CD8-positive, alpha-beta T cell (primary cell): ENCODE measurements at regions of chr2 and their contacts with region 1.

Region 1: GRCh38 chr2:7567646-7568045 is 650.4 kb downstream of the RNF144A start:
- DNase-seq: peak; percentile 35 to 88 (median 66)
- ATAC-seq: peak; percentile 92
- H3K4me3 ChIP-seq: no peak overlapping the region
- H3K4me3 Mint-ChIP-seq: peak overlapping the region; percentile 32
- H3K27ac ChIP-seq: peak overlapping the region; percentile 34 to 53
- H3K27ac Mint-ChIP-seq: peak overlapping the region; percentile 87
- H3K4me1 ChIP-seq: peaks cover 61% of the 10 kb centered on the region
- H3K4me1 Mint-ChIP-seq: peaks cover 71% of the 10 kb centered on the region
- H3K27me3 ChIP-seq: no peaks in the 10 kb centered on the region
- H3K27me3 Mint-ChIP-seq: no peaks in the 10 kb centered on the region
- CTCF ChIP-seq: no peak

Region 2: GRCh38 chr2:7450188-7450832 is 117.3 kb before region 1 on chr2:
- CTCF ChIA-PET with region 1: interaction called, 12 read pairs
- POLR2A ChIA-PET with region 1: interaction called, 17 read pairs
- intact Hi-C with region 1: loop called (anchors 1 to 5 kb)
- DNase-seq: peak in 6 of 9 experiments; percentile 41 to 90 (median 68)
- ATAC-seq: peak; percentile 80
- H3K4me3 ChIP-seq: no peak overlapping the region
- H3K4me3 Mint-ChIP-seq: peak overlapping the region; percentile 65
- H3K27ac ChIP-seq: peak overlapping the region; percentile 51 to 81
- H3K27ac Mint-ChIP-seq: peak overlapping the region; percentile 98
- H3K4me1 ChIP-seq: peaks cover 70% of the 10 kb centered on the region
- H3K4me1 Mint-ChIP-seq: peaks cover 85% of the 10 kb centered on the region
- H3K27me3 ChIP-seq: no peaks in the 10 kb centered on the region
- H3K27me3 Mint-ChIP-seq: no peaks in the 10 kb centered on the region
- CTCF ChIP-seq: no peak

Region 3: DNA sequence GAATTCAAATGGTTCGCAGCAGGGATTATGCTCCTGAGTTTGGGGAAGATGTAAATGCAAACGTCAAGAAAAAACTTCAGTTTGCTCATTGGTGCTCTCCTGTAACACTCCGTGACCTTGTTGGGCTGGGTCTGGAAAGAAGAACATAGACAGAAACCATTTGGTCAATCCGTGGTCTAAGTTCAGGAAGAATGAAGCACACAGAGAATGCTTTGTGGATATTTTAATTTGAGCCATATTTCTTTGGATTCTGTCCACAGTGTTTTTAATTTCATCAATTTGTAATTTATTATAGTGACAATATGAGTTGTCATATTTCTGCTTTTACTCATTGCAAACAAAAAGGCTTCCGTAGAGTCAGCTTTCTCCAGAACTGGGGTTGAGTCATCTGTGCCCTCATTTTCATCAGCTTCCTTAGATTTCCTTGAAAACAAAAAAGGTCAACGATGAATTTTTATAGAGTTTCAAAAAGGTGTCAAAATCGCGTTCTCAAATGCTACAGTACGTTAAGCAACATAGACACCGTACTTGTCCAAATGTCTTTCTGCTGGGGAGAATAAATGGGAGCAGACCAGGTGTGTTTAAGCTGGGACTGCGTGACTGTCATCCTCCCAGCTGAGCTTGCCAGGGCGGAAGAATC is 44.0 kb before region 1 on chr2:
- CTCF ChIA-PET with region 1: no interaction called
- POLR2A ChIA-PET with region 1: no interaction called
- intact Hi-C with region 1: loop called in 1 of 2 experiments (anchors 5 kb)
- DNase-seq: no peak
- ATAC-seq: no peak
- H3K4me3 ChIP-seq: no peak overlapping the region
- H3K4me3 Mint-ChIP-seq: no peak overlapping the region
- H3K27ac ChIP-seq: no peak overlapping the region
- H3K27ac Mint-ChIP-seq: no peak overlapping the region
- H3K4me1 ChIP-seq: peaks cover 3% of the 10 kb centered on the region
- H3K4me1 Mint-ChIP-seq: peaks cover 33% of the 10 kb centered on the region
- H3K27me3 ChIP-seq: no peaks in the 10 kb centered on the region
- H3K27me3 Mint-ChIP-seq: no peaks in the 10 kb centered on the region
- CTCF ChIP-seq: no peak

Region 4: DNA sequence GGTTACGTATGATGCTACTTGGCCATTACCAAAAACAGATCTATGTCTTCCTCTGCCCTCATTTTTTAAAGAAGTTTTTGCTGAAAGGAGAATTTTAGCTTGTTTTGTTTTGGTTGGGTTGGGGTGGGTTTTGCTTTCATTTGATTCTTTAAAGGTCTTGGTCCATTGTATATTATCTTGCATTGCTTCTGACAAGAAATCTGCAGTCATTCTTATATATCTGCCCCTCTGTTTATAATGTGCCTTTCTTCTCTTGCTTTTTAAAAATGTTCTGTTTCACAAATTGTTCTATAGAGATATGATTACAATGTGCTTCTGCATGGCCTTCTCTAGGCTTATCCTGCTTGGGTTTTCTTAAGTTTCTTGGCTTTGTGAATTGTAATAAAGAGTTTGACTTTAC is 10.1 kb after region 1 on chr2:
- CTCF ChIA-PET with region 1: interaction called, 19 read pairs
- POLR2A ChIA-PET with region 1: interaction called, 4 read pairs
- intact Hi-C with region 1: no loop called
- DNase-seq: no peak
- ATAC-seq: no peak
- H3K4me3 ChIP-seq: no peak overlapping the region
- H3K4me3 Mint-ChIP-seq: no peak overlapping the region
- H3K27ac ChIP-seq: no peak overlapping the region
- H3K27ac Mint-ChIP-seq: no peak overlapping the region
- H3K4me1 ChIP-seq: peaks cover 7% of the 10 kb centered on the region
- H3K4me1 Mint-ChIP-seq: peaks cover 8% of the 10 kb centered on the region
- H3K27me3 ChIP-seq: peaks cover 0 to 3% of the 10 kb centered on the region in 2 experiments
- H3K27me3 Mint-ChIP-seq: no peaks in the 10 kb centered on the region
- CTCF ChIP-seq: no peak

Region 5: GRCh38 chr2:7672027-7672684 is 104.5 kb after region 1 on chr2:
- CTCF ChIA-PET with region 1: interaction called, 19 read pairs
- POLR2A ChIA-PET with region 1: interaction called, 14 read pairs
- intact Hi-C with region 1: loop called in 1 of 2 experiments (anchors 5 kb)
- DNase-seq: peak; percentile 18 to 78 (median 47)
- ATAC-seq: peak; percentile 64
- H3K4me3 ChIP-seq: peak overlapping the region in 1 of 2 experiments; percentile 0
- H3K4me3 Mint-ChIP-seq: peak overlapping the region; percentile 57
- H3K27ac ChIP-seq: peak overlapping the region; percentile 4 to 42
- H3K27ac Mint-ChIP-seq: peak overlapping the region; percentile 95
- H3K4me1 ChIP-seq: peaks cover 29% of the 10 kb centered on the region
- H3K4me1 Mint-ChIP-seq: peaks cover 39% of the 10 kb centered on the region
- H3K27me3 ChIP-seq: no peaks in the 10 kb centered on the region
- H3K27me3 Mint-ChIP-seq: no peaks in the 10 kb centered on the region
- CTCF ChIP-seq: peak; percentile 61

Region 6: DNA sequence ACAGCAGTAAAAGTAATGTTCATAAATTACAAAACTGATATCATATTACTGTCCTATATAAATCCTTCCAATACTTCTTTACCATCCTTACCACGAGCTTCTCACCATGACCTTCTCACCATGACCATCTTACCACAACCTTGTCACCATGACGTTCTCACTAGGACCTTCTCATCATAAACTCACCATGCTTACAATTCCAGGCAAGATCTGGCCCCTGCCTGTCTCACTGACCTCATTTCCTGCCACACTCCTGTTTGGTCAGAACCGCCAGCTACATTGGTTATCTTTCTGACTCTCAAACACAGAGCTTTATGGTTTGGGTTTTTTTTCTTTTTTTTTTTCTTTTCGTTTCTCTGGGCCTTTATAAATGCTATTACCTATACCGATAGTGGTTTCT is 177.2 kb after region 1 on chr2:
- CTCF ChIA-PET with region 1: interaction called, 9 read pairs
- POLR2A ChIA-PET with region 1: interaction called, 4 read pairs
- intact Hi-C with region 1: loop called in 1 of 2 experiments (anchors 5 kb)
- DNase-seq: peak in 8 of 9 experiments; percentile 23 to 93 (median 48)
- ATAC-seq: peak; percentile 74
- H3K4me3 ChIP-seq: peak overlapping the region in 1 of 2 experiments; percentile 10
- H3K4me3 Mint-ChIP-seq: no peak overlapping the region
- H3K27ac ChIP-seq: peak overlapping the region in 1 of 2 experiments; percentile 66
- H3K27ac Mint-ChIP-seq: peak overlapping the region; percentile 72
- H3K4me1 ChIP-seq: peaks cover 21% of the 10 kb centered on the region
- H3K4me1 Mint-ChIP-seq: peaks cover 62% of the 10 kb centered on the region
- H3K27me3 ChIP-seq: no peaks in the 10 kb centered on the region
- H3K27me3 Mint-ChIP-seq: no peaks in the 10 kb centered on the region
- CTCF ChIP-seq: no peak